Activated B cell treated with CpG ODN at 0.5 μM for 24 hours (primary cell): ENCODE measurements at regions of chr16 and their contacts with region 1.

Region 1: DNA sequence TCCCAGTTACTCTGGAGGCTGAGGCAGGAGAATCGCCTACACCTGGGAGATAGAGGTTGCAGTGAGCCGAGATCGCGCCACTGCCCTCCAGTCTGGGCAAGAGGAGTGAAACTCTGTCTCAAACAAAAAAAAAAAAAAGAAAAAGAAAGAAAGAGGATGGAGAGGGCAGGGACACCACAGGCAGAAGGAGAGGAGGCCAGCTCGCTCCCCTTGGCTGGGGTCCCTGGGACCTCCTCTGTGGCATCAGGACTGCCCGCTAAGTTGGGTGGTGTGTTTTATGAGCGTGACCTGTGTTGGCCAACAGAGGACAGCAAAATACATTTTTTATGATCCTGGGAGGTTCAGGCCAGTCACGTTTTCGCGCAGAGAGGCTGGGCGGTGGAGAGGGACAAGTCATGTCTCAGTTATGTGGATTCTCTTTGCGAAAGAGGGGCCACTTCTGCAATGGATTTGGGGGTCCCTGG is 229.6 kb downstream of the MRTFB start:
- DNase-seq: no peak
- ATAC-seq: peak; percentile 60
- H3K4me3 Mint-ChIP-seq: peak overlapping the region; percentile 83
- H3K27ac Mint-ChIP-seq: peak overlapping the region; percentile 61
- H3K4me1 Mint-ChIP-seq: peaks cover 16% of the 10 kb centered on the region
- H3K27me3 Mint-ChIP-seq: peaks cover 14% of the 10 kb centered on the region
- CTCF ChIP-seq: no peak

Region 2: GRCh38 chr16:14249291-14250032 is 51.3 kb before region 1 on chr16:
- CTCF ChIA-PET with region 1: no interaction called
- POLR2A ChIA-PET with region 1: no interaction called
- intact Hi-C with region 1: no loop called
- DNase-seq: no peak
- ATAC-seq: no peak
- H3K4me3 Mint-ChIP-seq: no peak overlapping the region
- H3K27ac Mint-ChIP-seq: no peak overlapping the region
- H3K4me1 Mint-ChIP-seq: no peaks in the 10 kb centered on the region
- H3K27me3 Mint-ChIP-seq: no peaks in the 10 kb centered on the region
- CTCF ChIP-seq: peak; percentile 76

Region 3: GRCh38 chr16:14285513-14286385 is 15.0 kb before region 1 on chr16:
- CTCF ChIA-PET with region 1: interaction called, 9 read pairs
- POLR2A ChIA-PET with region 1: interaction called, 6 read pairs
- intact Hi-C with region 1: loop called (anchors 1 kb)
- DNase-seq: peak; percentile 98
- ATAC-seq: peak; percentile 79
- H3K4me3 Mint-ChIP-seq: peak overlapping the region; percentile 92
- H3K27ac Mint-ChIP-seq: peak overlapping the region; percentile 87
- H3K4me1 Mint-ChIP-seq: peaks cover 23% of the 10 kb centered on the region
- H3K27me3 Mint-ChIP-seq: peaks cover 2% of the 10 kb centered on the region
- CTCF ChIP-seq: no peak

Region 4: DNA sequence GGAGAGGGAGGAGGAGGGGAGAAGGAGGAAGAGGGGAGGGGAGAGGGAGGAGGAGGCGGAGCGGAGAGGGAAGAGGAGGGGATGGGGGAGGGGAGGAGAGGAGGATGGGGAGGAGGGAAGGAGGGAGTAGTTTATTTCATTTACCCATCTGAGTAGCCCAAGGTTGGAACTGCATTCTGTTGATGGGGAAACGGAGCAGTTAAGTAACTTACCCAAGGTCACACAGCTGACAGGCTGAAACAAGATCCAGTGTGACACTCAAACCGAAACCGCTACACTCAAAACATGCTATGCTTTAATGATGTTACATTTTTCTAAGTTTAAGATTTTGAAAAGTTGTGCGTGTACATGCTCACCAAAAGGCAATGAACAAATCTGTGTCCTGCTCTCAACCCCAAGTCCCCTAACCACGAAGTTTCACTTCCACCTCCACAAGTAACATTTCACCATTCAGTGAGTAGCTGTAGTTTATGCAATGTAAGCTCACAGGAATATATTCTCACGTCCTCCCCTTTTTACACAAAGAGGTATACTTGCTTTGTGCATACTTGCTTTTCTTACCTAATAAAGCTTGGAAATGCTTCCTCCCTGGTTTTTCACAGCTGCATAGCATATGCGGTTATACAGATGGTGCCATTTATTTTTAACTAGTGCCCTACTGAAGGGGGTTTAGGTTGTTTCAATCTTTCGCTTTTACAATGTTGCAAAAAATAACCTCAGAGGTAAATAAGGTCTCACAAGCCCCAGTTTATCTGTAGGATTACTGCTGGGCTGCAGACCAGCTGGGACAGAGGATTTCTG is 54.0 kb after region 1 on chr16:
- CTCF ChIA-PET with region 1: no interaction called
- POLR2A ChIA-PET with region 1: no interaction called
- intact Hi-C with region 1: loop called (anchors 1 kb)
- DNase-seq: no peak
- ATAC-seq: peak; percentile 93
- H3K4me3 Mint-ChIP-seq: peak overlapping the region; percentile 59
- H3K27ac Mint-ChIP-seq: peak overlapping the region; percentile 64
- H3K4me1 Mint-ChIP-seq: peaks cover 32% of the 10 kb centered on the region
- H3K27me3 Mint-ChIP-seq: peaks cover 2% of the 10 kb centered on the region
- CTCF ChIP-seq: no peak

Region 5: DNA sequence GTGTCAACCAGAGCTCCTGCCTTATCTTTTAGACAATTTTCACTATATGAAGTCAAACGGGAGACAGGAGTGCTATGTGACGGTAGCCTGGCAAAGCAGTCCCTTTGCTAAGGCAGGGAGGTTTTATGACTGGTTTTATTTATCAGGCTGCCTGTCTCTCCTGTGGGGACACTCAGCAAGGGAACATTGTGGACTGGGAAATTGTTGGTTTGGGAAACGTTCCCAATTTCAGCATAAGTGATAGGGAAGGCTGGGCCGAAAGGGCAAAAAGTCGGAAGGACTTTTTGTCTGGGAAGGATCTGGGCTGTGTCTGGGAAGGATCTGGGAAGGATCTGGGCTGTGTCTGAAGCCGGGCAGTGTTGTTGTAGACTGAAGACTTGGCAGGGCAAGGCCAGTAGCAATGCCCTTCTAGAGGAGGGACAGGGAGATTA is 118.1 kb after region 1 on chr16:
- CTCF ChIA-PET with region 1: no interaction called
- POLR2A ChIA-PET with region 1: no interaction called
- intact Hi-C with region 1: loop called (anchors 10 kb)
- DNase-seq: no peak
- ATAC-seq: no peak
- H3K4me3 Mint-ChIP-seq: no peak overlapping the region
- H3K27ac Mint-ChIP-seq: no peak overlapping the region
- H3K4me1 Mint-ChIP-seq: peaks cover 16% of the 10 kb centered on the region
- H3K27me3 Mint-ChIP-seq: no peaks in the 10 kb centered on the region
- CTCF ChIP-seq: no peak

Region 6: DNA sequence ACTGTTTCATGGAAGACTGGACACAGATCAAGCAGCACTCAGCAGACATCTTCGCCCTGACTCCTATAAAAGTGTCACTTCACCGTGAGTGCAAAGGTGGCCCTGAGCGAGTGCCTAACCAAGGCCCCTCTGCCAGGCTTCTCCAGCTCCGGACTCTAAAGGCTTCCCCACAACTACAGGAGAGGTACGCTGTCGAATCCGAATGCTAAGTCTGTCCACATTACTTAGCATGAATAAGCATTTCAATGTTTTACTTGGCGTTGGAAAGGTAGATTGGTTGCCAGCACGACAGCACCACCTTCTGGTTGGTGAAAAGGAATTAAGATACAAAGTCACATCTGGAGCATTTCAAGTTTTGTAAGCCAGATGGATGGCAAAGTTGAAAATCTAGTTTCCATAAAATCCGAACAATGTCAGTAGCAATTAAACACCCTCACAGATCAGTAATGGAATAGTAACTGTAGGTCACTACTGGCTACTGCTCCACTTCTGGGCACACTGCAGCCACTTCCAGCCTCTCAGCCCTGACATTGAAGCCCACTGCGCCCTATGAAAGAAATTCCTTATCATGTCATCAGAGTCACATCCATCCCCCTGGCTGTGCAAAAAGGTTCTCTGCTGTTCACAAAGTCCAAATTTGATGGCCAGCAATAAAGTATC is 228.4 kb after region 1 on chr16:
- CTCF ChIA-PET with region 1: interaction called, 27 read pairs
- POLR2A ChIA-PET with region 1: no interaction called
- intact Hi-C with region 1: loop called (anchors 1 kb)
- DNase-seq: peak; percentile 24
- ATAC-seq: peak; percentile 65
- H3K4me3 Mint-ChIP-seq: no peak overlapping the region
- H3K27ac Mint-ChIP-seq: no peak overlapping the region
- H3K4me1 Mint-ChIP-seq: peaks cover 5% of the 10 kb centered on the region
- H3K27me3 Mint-ChIP-seq: no peaks in the 10 kb centered on the region
- CTCF ChIP-seq: no peak

Region 7: GRCh38 chr16:14600164-14600563 is 299.4 kb after region 1 on chr16:
- CTCF ChIA-PET with region 1: no interaction called
- POLR2A ChIA-PET with region 1: interaction called, 3 read pairs
- intact Hi-C with region 1: loop called (anchors 1 kb)
- DNase-seq: no peak
- ATAC-seq: no peak
- H3K4me3 Mint-ChIP-seq: no peak overlapping the region
- H3K27ac Mint-ChIP-seq: no peak overlapping the region
- H3K4me1 Mint-ChIP-seq: no peaks in the 10 kb centered on the region
- H3K27me3 Mint-ChIP-seq: no peaks in the 10 kb centered on the region
- CTCF ChIP-seq: peak; percentile 49

Region 8: DNA sequence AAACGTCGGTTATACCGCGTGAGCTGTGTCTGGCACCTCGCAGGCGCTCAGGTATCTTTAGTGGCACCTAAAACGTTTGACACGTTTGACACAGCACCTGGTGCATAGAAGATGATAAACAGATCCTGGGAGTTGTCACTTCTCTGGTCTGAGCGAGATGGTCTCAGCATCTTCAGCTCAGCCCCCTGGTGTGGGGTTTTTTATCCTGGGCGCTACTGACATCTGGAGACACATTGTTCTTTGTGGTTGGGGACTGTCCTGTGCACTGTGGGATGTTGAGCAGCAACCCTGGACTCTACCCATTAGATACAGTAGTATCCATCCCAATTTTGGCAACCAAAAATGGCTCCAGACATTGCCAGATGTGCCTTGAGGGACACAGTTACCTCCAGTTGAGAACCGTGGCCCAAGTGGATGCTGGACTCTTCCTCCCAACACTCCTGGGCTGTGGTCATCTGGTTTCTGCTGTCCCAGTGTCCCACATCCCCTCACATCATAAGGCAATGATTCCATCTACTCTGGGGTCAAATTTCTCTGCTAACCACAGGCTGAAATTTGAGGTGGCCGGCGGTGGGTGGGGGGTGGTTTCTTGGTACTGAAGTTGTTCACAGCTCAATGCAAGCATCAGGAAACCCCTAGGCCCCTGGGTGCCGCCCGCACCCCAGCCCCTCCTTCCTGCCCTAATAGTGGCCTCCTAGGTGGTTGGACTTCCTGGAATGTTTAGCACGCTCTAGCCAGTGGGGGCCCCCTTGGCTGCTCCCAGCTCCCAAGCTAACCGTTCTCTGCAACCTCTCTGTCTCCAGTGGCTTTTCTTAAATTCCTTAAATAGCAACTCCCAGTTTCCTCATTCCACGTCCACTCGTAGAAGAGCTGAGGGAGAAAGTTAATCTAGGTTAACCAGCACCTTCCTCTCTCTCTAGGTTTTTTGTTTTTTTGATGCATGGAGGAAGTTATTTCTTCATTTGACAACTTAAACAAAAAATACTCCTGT is 1773.4 kb after region 1 on chr16:
- CTCF ChIA-PET with region 1: no interaction called
- POLR2A ChIA-PET with region 1: interaction called, 13 read pairs
- intact Hi-C with region 1: no loop called
- DNase-seq: no peak
- ATAC-seq: no peak
- H3K4me3 Mint-ChIP-seq: no peak overlapping the region
- H3K27ac Mint-ChIP-seq: peak overlapping the region; percentile 38
- H3K4me1 Mint-ChIP-seq: peaks cover 34% of the 10 kb centered on the region
- H3K27me3 Mint-ChIP-seq: no peaks in the 10 kb centered on the region
- CTCF ChIP-seq: no peak